ENCODE measurements at regions of chr3 and their contacts with region 1.

Region 1: GRCh38 chr3:169980055-169980454 is 13.4 kb downstream of the SEC62 start:
- DNase-seq: no peak
- H3K4me3 ChIP-seq: no peak overlapping the region
- H3K27ac ChIP-seq: no peak overlapping the region
- H3K4me1 ChIP-seq: no peaks in the 10 kb centered on the region
- H3K27me3 ChIP-seq: no peaks in the 10 kb centered on the region
- CTCF ChIP-seq: no peak

Region 2: GRCh38 chr3:169772897-169773828 is 206.9 kb before region 1 on chr3 and contains the start of gene MYNN:
- intact Hi-C with region 1: loop called (anchors 10 kb)
- DNase-seq: peak; percentile 96
- H3K4me3 ChIP-seq: peak within 1 kb of the TSS; percentile 87
- H3K27ac ChIP-seq: peak within 1 kb of the TSS; percentile 100
- H3K4me1 ChIP-seq: peaks cover 23% of the 10 kb centered on the region
- H3K27me3 ChIP-seq: no peaks in the 10 kb centered on the region
- CTCF ChIP-seq: no peak
- total RNA-seq, gene MYNN: 11.1 to 12.9 TPM